IMR-90 (cell line): ENCODE measurements at regions of chr12 and their contacts with region 1.

Region 1: GRCh38 chr12:24177889-24178288 is 228.4 kb upstream of the SOX5 start:
- DNase-seq: no peak
- ATAC-seq: no peak
- H3K4me3 ChIP-seq: no peak overlapping the region
- H3K27ac ChIP-seq: no peak overlapping the region
- H3K4me1 ChIP-seq: no peaks in the 10 kb centered on the region
- H3K27me3 ChIP-seq: no peaks in the 10 kb centered on the region
- CTCF ChIP-seq: no peak
- POLR2A ChIP-seq: no peak
- RAD21 ChIP-seq: no peak

Region 2: DNA sequence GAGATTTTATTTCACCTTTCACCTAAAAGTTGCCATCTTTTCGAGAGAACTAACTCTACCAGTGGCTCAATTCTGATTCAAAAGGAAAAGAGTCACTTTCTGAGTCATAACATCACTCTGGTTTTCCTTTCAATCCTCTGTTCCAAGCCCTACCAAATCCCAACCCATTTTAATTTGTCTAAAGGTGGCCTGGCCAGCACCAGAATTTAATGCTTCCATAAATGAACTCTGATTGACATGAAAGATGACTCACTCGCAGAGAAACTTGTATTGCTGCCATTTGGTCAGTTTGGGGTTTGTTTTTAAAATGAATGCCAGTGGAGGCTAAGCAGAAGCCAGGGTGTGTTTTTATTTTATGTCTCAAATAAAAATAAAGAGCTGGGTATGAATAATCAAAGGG is 111.0 kb before region 1 on chr12:
- CTCF ChIA-PET with region 1: no interaction called
- POLR2A ChIA-PET with region 1: no interaction called
- dilution Hi-C with region 1: no loop called
- in situ Hi-C with region 1: no loop called
- intact Hi-C with region 1: no loop called
- DNase-seq: peak; percentile 77
- ATAC-seq: peak; percentile 82
- H3K4me3 ChIP-seq: no peak overlapping the region
- H3K27ac ChIP-seq: no peak overlapping the region
- H3K4me1 ChIP-seq: no peaks in the 10 kb centered on the region; the same call in 1 of the 2 replicates
- H3K27me3 ChIP-seq: no peaks in the 10 kb centered on the region
- CTCF ChIP-seq: no peak
- POLR2A ChIP-seq: no peak
- RAD21 ChIP-seq: no peak

Region 3: DNA sequence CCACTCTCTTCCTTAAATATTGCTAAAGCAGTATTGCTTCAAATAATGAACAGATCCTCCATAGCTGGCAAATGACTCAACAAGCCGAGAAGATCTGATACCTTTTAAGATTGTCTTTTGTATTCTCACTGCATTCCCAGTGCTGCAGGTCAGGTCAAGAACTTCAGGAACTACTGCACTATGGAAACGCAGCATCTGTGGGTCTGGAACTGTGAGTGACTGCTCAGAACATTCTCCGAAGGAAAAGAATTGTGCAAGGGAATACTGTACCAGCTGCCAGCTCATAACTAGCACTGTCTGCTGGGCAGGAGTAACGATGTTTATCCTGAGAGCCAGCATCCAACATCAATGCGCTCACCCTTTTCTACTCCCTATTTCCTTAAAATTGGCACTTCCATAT is 119.6 kb after region 1 on chr12:
- CTCF ChIA-PET with region 1: no interaction called
- POLR2A ChIA-PET with region 1: interaction called, 13 read pairs
- dilution Hi-C with region 1: no loop called
- in situ Hi-C with region 1: no loop called
- intact Hi-C with region 1: no loop called
- DNase-seq: no peak
- ATAC-seq: no peak; the same call in 1 of the 2 replicates
- H3K4me3 ChIP-seq: no peak overlapping the region
- H3K27ac ChIP-seq: no peak overlapping the region
- H3K4me1 ChIP-seq: no peaks in the 10 kb centered on the region; the same call in 1 of the 2 replicates
- H3K27me3 ChIP-seq: no peaks in the 10 kb centered on the region
- CTCF ChIP-seq: no peak
- POLR2A ChIP-seq: no peak
- RAD21 ChIP-seq: no peak